ENCODE measurements at regions of chr1 and their contacts with region 1.

Region 1: DNA sequence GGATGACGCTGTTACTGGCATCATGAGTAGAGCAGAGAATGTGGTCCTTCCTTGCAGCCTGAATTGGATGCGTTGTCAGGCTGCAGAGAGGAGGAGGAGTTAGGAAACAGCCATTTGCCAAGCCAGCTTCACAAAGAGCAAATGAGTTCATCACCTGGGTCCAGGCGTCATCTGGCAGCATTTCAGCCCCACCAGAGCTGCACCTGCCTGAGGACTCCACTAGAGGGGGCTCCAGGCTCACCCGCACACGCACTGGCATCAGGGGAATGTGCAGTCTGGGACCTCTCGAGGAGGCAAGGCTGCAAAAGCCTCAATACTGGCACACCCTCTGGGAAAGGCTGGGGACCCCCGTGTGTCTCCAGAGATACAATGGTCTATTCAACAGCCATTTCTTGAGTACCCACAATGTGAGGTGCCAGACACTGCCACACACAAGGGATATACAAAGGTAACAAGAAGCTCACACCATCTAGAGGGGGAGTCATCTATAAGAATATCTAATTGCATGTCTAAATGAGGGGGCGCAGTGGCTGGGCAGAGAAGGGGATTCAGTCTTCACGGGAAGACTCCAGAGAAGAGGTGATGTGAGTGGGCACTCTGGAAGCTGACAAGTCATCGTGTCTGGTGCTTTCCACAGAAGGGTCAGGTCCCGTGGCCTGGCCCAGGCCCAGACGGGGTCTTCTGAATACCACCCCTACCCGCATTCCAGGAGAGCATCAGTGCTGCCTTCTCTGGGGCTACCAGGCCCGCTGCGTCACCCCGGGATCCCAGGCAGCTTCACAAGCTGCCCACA is 53.5 kb upstream of the CNTN2 start:
- DNase-seq: peak; percentile 74
- H3K4me3 ChIP-seq: no peak overlapping the region
- H3K27ac ChIP-seq: no peak overlapping the region
- H3K4me1 ChIP-seq: no peaks in the 10 kb centered on the region
- H3K27me3 ChIP-seq: no peaks in the 10 kb centered on the region
- CTCF ChIP-seq: peak; percentile 97

Region 2: GRCh38 chr1:204846546-204847167 is 142.8 kb before region 1 on chr1:
- CTCF ChIA-PET with region 1: no interaction called
- POLR2A ChIA-PET with region 1: no interaction called
- intact Hi-C with region 1: no loop called
- DNase-seq: no peak
- H3K4me3 ChIP-seq: no peak overlapping the region
- H3K27ac ChIP-seq: no peak overlapping the region
- H3K4me1 ChIP-seq: no peaks in the 10 kb centered on the region
- H3K27me3 ChIP-seq: no peaks in the 10 kb centered on the region
- CTCF ChIP-seq: no peak

Region 3: GRCh38 chr1:205061665-205062069 is 72.2 kb after region 1 on chr1:
- CTCF ChIA-PET with region 1: interaction called, 58 read pairs
- POLR2A ChIA-PET with region 1: no interaction called
- intact Hi-C with region 1: loop called (anchors 1 kb)
- DNase-seq: peak; percentile 87
- H3K4me3 ChIP-seq: no peak overlapping the region
- H3K27ac ChIP-seq: no peak overlapping the region
- H3K4me1 ChIP-seq: no peaks in the 10 kb centered on the region
- H3K27me3 ChIP-seq: no peaks in the 10 kb centered on the region
- CTCF ChIP-seq: peak; percentile 96

Region 4: DNA sequence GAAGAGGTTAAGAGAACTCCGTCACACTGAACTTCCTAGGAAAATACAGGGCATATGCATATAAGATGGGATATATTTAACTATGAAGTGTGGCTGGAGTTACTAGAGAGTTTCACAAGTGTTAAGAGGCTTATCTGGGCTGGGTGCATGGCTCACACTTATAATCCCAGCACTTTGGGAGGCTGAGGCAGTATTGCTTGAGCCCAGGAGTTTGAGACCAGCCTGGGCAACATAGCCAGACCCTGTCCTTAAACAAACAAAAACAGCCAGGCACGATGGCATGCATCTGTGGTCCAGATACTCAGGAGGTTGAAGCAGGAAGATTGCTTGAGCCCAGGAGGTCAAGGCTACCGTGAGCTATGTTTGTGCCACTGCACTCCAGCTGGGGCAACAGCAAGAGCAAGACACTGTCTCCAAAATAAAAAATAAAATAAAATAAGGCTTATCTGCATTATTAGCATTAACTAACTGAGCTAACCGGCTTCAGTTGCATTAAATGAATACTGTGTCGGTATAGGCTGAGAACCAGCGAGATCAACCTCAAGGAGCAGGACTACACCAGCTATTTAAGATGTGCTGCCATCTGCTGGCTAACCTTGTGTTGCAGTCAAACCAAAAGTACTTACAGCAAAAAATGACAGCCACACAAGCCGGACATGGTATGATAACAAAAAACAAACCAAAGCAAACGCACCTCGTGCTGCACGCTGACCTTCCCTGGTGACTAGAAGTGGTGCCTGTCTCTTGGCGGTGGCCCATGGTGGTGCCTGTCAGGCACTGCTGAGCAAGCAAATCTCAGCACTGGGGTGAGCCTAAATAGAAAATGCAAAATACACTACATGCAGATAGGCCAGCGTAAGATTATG is 152.0 kb after region 1 on chr1:
- CTCF ChIA-PET with region 1: interaction called, 9 read pairs
- POLR2A ChIA-PET with region 1: no interaction called
- intact Hi-C with region 1: loop called (anchors 5 kb)
- DNase-seq: peak; percentile 82
- H3K4me3 ChIP-seq: no peak overlapping the region
- H3K27ac ChIP-seq: no peak overlapping the region
- H3K4me1 ChIP-seq: no peaks in the 10 kb centered on the region
- H3K27me3 ChIP-seq: no peaks in the 10 kb centered on the region
- CTCF ChIP-seq: peak; percentile 86

Region 5: DNA sequence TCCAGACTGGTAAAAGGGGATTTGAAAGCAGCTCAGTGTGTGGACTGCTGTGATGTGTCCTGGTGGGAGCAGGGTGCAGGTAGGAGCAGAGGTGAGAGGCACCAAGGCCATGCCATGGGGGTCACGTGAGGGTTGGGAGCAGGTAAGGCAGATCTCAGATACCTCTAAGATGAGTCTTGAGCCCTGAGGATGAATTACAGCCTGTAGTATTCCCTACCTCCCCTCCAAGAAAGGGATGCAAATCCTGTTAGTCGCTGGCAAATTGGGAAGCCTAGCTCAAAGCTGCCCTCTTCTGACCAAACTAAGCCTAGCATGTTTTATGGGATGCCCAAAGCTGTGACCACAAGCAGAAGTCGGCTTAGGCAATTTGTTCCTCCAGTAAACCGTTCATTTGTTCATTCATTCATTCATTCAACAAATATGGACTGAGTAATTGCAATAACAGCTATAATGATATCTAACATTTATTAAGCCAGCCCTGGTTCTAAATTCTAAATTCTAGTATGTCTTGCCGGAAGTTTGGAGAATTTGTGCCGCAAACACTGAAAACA is 335.9 kb after region 1 on chr1:
- CTCF ChIA-PET with region 1: no interaction called
- POLR2A ChIA-PET with region 1: no interaction called
- intact Hi-C with region 1: loop called (anchors 1 kb)
- DNase-seq: peak; percentile 72
- H3K4me3 ChIP-seq: no peak overlapping the region
- H3K27ac ChIP-seq: no peak overlapping the region
- H3K4me1 ChIP-seq: no peaks in the 10 kb centered on the region
- H3K27me3 ChIP-seq: peaks cover 9% of the 10 kb centered on the region
- CTCF ChIP-seq: peak; percentile 70

Measured in A673 (cell line).